Astrocyte of the cerebellum (primary cell): ENCODE measurements at regions of chr3 and their contacts with region 1.

Region 1: DNA sequence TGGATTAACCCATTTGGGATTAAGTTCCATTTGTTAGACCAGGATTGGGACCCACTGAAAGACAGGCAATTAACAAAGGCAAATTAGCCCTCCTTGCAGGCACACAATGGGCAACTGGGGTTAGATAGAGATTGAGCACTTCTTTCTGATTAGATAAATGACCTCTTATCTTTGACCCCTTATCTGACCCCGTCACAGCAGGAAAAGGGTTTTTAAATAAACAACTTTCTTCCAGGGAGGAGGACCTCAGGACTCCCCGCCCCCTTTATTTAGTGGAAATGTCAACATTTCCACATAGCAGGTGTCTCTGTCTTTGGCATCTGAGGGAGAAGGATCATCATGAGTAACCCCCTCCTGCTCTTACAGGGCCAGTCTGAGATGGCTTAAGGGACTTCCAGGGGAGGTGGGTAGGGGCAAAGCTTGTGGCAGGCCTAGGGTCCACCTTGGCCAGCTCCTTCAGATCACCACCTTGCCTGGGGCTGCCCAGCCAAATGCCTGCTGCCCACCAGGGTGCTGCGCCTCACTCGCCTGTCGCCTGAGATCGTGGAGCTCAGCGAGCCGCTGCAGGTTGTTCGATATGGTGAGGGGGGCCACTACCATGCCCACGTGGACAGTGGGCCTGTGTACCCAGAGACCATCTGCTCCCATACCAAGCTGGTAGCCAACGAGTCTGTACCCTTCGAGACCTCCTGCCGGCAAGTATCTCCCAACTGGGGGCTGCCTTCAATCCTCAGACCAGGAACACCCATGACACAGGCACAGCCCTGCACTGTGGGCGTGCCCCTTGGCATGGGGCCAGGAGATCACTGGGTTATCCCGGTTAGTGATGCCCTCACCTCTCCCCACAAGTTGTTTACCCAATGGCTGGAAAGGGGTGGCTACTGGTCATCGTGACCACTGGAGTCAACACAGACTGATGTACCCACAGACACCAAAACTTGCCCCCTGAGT is 2.6 kb upstream of the WDR6 start:
- DNase-seq: no peak
- H3K4me3 ChIP-seq: no peak overlapping the region
- CTCF ChIP-seq: no peak

Region 2: GRCh38 chr3:48952510-48953118 is 52.0 kb before region 1 on chr3:
- in situ Hi-C with region 1: loop called (anchors 5 kb)
- DNase-seq: no peak
- H3K4me3 ChIP-seq: no peak overlapping the region
- CTCF ChIP-seq: peak; percentile 56

Region 3: DNA sequence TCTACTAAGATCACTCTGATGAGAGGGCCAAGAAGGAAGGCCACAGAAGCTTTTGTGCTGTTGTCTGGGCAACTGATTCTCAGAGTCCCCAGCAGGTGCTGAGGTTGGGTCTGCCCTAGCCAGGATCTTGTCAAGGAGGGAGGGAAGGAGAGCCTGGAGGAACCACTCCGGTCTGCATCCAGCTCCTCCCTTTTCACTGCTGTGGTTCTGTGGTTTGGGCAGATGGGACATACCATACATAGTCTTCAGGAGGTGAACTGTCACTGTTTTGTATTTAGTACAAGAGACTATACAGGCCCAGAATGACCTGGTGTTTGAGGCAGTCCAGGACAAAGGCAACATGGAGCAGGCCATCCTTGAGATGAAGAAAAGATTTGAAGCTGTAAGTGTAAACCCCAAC is 250.5 kb after region 1 on chr3:
- in situ Hi-C with region 1: no loop called
- DNase-seq: no peak
- H3K4me3 ChIP-seq: no peak overlapping the region
- CTCF ChIP-seq: no peak